Gastrocnemius medialis (tissue), 4 donors: ENCODE measurements at regions of chr19 and their contacts with region 1.

Region 1: GRCh38 chr19:39397360-39398296 is 6.5 kb downstream of the MED29 start:
- DNase-seq: peak; percentile 66 to 92
- ATAC-seq: peak; percentile 75 to 80
- H3K4me3 ChIP-seq: peak overlapping the region in 2 of 4 donors; percentile 5 to 37
- H3K27ac ChIP-seq: peak overlapping the region; percentile 90 to 100 (median 98)
- H3K4me1 ChIP-seq: peaks cover 22 to 28% of the 10 kb centered on the region in 2 donors
- H3K27me3 ChIP-seq: no peaks in the 10 kb centered on the region
- CTCF ChIP-seq: peak; percentile 97 to 100 (median 99)
- POLR2A ChIP-seq: peak in 1 of 2 donors; percentile 13

Region 2: GRCh38 chr19:38374429-38375176 is 1023.0 kb before region 1 on chr19 and contains the start of gene PSMD8:
- in situ Hi-C with region 1: no loop called
- intact Hi-C with region 1: loop called (anchors 10 kb)
- DNase-seq: peak; percentile 99 to 100
- ATAC-seq: peak; percentile 81 to 88
- H3K4me3 ChIP-seq: peak within 1 kb of the TSS; percentile 91 to 99 (median 96)
- H3K27ac ChIP-seq: peak within 1 kb of the TSS; percentile 97 to 100 (median 98)
- H3K4me1 ChIP-seq: peaks cover 16 to 25% of the 10 kb centered on the region in 2 donors
- H3K27me3 ChIP-seq: no peaks in the 10 kb centered on the region
- CTCF ChIP-seq: peak in 3 of 5 experiments; percentile 6 to 34 (median 16)
- POLR2A ChIP-seq: peak; percentile 99
- total RNA-seq, gene PSMD8: 819 to 1,400 (median 1,309) TPM

Region 3: GRCh38 chr19:38658462-38659306 is 738.9 kb before region 1 on chr19:
- in situ Hi-C with region 1: no loop called
- intact Hi-C with region 1: loop called (anchors 10 kb)
- DNase-seq: peak in 1 of 2 donors; percentile 59
- ATAC-seq: peak; percentile 74 to 79
- H3K4me3 ChIP-seq: peak overlapping the region in 2 of 4 donors; percentile 12 to 18
- H3K27ac ChIP-seq: peak overlapping the region; percentile 98 to 100 (median 99)
- H3K4me1 ChIP-seq: peaks cover 97 to 98% of the 10 kb centered on the region in 2 donors
- H3K27me3 ChIP-seq: no peaks in the 10 kb centered on the region
- CTCF ChIP-seq: no peak
- POLR2A ChIP-seq: peak in 1 of 2 donors; percentile 7

Region 4: GRCh38 chr19:38831142-38831605 is 566.5 kb before region 1 on chr19:
- in situ Hi-C with region 1: no loop called
- intact Hi-C with region 1: loop called (anchors 10 kb)
- DNase-seq: peak in 1 of 2 donors; percentile 81
- ATAC-seq: peak; percentile 23 to 24
- H3K4me3 ChIP-seq: peak overlapping the region; percentile 63 to 83 (median 74)
- H3K27ac ChIP-seq: peak overlapping the region; percentile 91 to 100 (median 98)
- H3K4me1 ChIP-seq: peaks cover 49 to 60% of the 10 kb centered on the region in 2 donors
- H3K27me3 ChIP-seq: no peaks in the 10 kb centered on the region
- CTCF ChIP-seq: no peak
- POLR2A ChIP-seq: no peak

Region 5: DNA sequence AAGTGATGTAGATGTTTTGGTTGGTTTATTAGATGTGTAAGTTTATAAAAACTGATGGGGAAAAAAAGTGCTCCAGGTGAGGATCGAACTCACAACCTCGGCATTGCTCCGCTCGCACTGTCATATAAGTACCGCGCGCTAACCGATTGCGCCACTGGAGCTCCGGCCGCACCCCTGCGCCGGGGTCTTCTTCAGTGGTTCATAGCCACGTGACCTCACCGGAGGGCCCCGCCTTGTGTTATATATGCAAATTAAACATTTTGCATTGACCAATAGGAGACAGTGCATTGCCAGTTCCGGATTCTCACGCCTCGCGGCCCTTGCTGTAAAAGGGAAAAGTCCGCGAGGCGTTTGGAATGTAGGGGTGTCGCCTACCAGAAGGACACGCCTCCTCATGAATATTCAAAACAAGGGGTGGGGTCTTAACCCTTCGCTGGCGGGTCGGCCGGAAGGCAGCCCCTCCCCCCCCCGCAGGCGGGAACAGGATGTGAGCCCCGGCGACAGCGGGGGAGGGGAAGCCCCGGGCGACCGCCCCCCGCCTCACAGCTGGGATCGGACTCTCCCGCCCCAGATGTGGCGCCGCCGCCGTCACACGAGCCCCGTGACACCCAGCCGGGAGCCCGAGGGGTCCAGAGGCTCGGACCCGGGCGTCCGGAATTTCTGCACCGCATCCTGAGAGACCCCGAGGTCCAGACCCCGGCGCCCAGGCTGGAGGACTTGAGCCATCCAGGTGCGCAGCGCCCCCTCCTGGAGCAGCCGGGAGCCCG is 14.7 kb after region 1 on chr19 and contains the start of gene PLEKHG2:
- in situ Hi-C with region 1: no loop called
- intact Hi-C with region 1: loop called (anchors 1 kb)
- DNase-seq: peak; percentile 97 to 98
- ATAC-seq: peak; percentile 63 to 73
- H3K4me3 ChIP-seq: peak within 1 kb of the TSS; percentile 81 to 99 (median 94)
- H3K27ac ChIP-seq: peak within 1 kb of the TSS; percentile 98 to 100 (median 100)
- H3K4me1 ChIP-seq: peaks cover 15 to 19% of the 10 kb centered on the region in 2 donors
- H3K27me3 ChIP-seq: no peaks in the 10 kb centered on the region
- CTCF ChIP-seq: peak; percentile 90 to 98 (median 97)
- POLR2A ChIP-seq: peak; percentile 70 to 87
- total RNA-seq, gene PLEKHG2: 1.3 to 3.6 (median 3.3) TPM

Region 6: GRCh38 chr19:40285353-40286234 is 888.0 kb after region 1 on chr19:
- in situ Hi-C with region 1: no loop called
- intact Hi-C with region 1: loop called (anchors 10 kb)
- DNase-seq: peak; percentile 99 to 100
- ATAC-seq: peak; percentile 88 to 90
- H3K4me3 ChIP-seq: peak overlapping the region; percentile 69 to 94 (median 77)
- H3K27ac ChIP-seq: peak overlapping the region; percentile 89 to 99 (median 95)
- H3K4me1 ChIP-seq: peaks cover 44 to 48% of the 10 kb centered on the region in 2 donors
- H3K27me3 ChIP-seq: no peaks in the 10 kb centered on the region
- CTCF ChIP-seq: no peak
- POLR2A ChIP-seq: peak in 1 of 2 donors; percentile 48

Region 7: GRCh38 chr19:40425450-40426287 is 1028.0 kb after region 1 on chr19 and contains the start of gene SERTAD1:
- in situ Hi-C with region 1: no loop called
- intact Hi-C with region 1: loop called (anchors 10 kb)
- DNase-seq: peak; percentile 99 to 100
- ATAC-seq: peak; percentile 82 to 87
- H3K4me3 ChIP-seq: peak within 1 kb of the TSS; percentile 78 to 94 (median 84)
- H3K27ac ChIP-seq: peak within 1 kb of the TSS; percentile 98 to 100 (median 99)
- H3K4me1 ChIP-seq: peaks cover 32 to 34% of the 10 kb centered on the region in 2 donors
- H3K27me3 ChIP-seq: no peaks in the 10 kb centered on the region
- CTCF ChIP-seq: peak in 4 of 5 experiments; percentile 66 to 97 (median 90)
- POLR2A ChIP-seq: peak; percentile 100
- total RNA-seq, gene SERTAD1: 15.3 to 18.3 (median 16.0) TPM